Activated naive CD4-positive, alpha-beta T cell treated with anti-CD3 and anti-CD28 coated beads for 36 hours (primary cell): ENCODE measurements at regions of chr4 and their contacts with region 1.

Region 1: GRCh38 chr4:87150498-87151261 is 69.7 kb downstream of the KLHL8 start:
- DNase-seq: peak; percentile 67
- H3K4me3 Mint-ChIP-seq: no peak overlapping the region
- H3K27ac Mint-ChIP-seq: no peak overlapping the region
- H3K4me1 Mint-ChIP-seq: no peaks in the 10 kb centered on the region
- H3K27me3 Mint-ChIP-seq: no peaks in the 10 kb centered on the region

Region 2: GRCh38 chr4:86759298-86759697 is 391.4 kb before region 1 on chr4:
- CTCF ChIA-PET with region 1: no interaction called
- intact Hi-C with region 1: no loop called
- DNase-seq: no peak
- H3K4me3 Mint-ChIP-seq: no peak overlapping the region
- H3K27ac Mint-ChIP-seq: no peak overlapping the region
- H3K4me1 Mint-ChIP-seq: no peaks in the 10 kb centered on the region
- H3K27me3 Mint-ChIP-seq: peaks cover 2% of the 10 kb centered on the region

Region 3: DNA sequence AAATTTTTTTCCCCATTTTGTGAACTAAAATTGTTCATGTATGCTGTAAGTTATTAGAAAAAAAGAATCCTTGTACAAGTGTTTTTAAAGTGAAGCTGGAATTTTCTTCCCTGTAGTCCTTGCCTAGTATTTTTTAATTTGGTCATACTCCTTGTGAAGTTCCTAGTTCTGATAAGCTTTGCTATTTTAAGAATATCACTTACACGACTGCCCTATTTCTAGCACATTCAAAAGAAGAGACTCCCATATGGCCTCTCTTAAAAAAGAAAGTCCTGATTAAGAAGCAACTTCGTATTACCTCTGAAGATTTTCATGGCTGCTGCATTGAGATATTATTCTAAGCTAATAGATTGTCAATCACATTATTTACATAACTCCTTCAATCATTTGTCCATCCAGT is 17.5 kb before region 1 on chr4:
- CTCF ChIA-PET with region 1: interaction called, 12 read pairs
- intact Hi-C with region 1: no loop called
- DNase-seq: no peak
- H3K4me3 Mint-ChIP-seq: no peak overlapping the region
- H3K27ac Mint-ChIP-seq: no peak overlapping the region
- H3K4me1 Mint-ChIP-seq: no peaks in the 10 kb centered on the region
- H3K27me3 Mint-ChIP-seq: no peaks in the 10 kb centered on the region

Region 4: GRCh38 chr4:87235020-87235671 is 84.5 kb after region 1 on chr4:
- CTCF ChIA-PET with region 1: interaction called, 28 read pairs
- intact Hi-C with region 1: loop called (anchors 1 kb)
- DNase-seq: no peak
- H3K4me3 Mint-ChIP-seq: no peak overlapping the region
- H3K27ac Mint-ChIP-seq: no peak overlapping the region
- H3K4me1 Mint-ChIP-seq: no peaks in the 10 kb centered on the region
- H3K27me3 Mint-ChIP-seq: peaks cover 2% of the 10 kb centered on the region

Region 5: GRCh38 chr4:87422104-87423052 is 271.7 kb after region 1 on chr4 and contains the start of gene NUDT9:
- CTCF ChIA-PET with region 1: interaction called, 5 read pairs
- intact Hi-C with region 1: loop called (anchors 2 kb)
- DNase-seq: peak; percentile 91
- H3K4me3 Mint-ChIP-seq: peak within 1 kb of the TSS; percentile 98
- H3K27ac Mint-ChIP-seq: peak within 1 kb of the TSS; percentile 97
- H3K4me1 Mint-ChIP-seq: peaks cover 32% of the 10 kb centered on the region
- H3K27me3 Mint-ChIP-seq: no peaks in the 10 kb centered on the region
- total RNA-seq, gene NUDT9: 12.1 to 13.4 TPM